ENCODE measurements at regions of chr2 and their contacts with region 1.

Region 1: GRCh38 chr2:37832590-37833197 is 92.4 kb upstream of the RMDN2 start:
- DNase-seq: peak; percentile 90
- ATAC-seq: peak; percentile 73

Region 2: GRCh38 chr2:37394263-37394662 is 438.4 kb before region 1 on chr2:
- intact Hi-C with region 1: loop called (anchors 5 kb)
- DNase-seq: no peak
- ATAC-seq: no peak

Region 3: GRCh38 chr2:37415128-37415820 is 417.4 kb before region 1 on chr2:
- intact Hi-C with region 1: loop called (anchors 5 kb)
- DNase-seq: no peak
- ATAC-seq: peak; percentile 60

Region 4: GRCh38 chr2:37664231-37664643 is 168.5 kb before region 1 on chr2:
- intact Hi-C with region 1: loop called (anchors 10 kb)
- DNase-seq: no peak
- ATAC-seq: no peak

Region 5: GRCh38 chr2:37982147-37982582 is 149.5 kb after region 1 on chr2:
- intact Hi-C with region 1: no loop called
- DNase-seq: peak; percentile 66
- ATAC-seq: peak; percentile 35

Region 6: GRCh38 chr2:38013158-38013752 is 180.6 kb after region 1 on chr2:
- intact Hi-C with region 1: no loop called
- DNase-seq: no peak
- ATAC-seq: no peak

Measured in left ventricle myocardium superior (tissue), 1 donor.